Naive thymus-derived CD4-positive, alpha-beta T cell (primary cell): ENCODE measurements at regions of chr15 and their contacts with region 1.

Region 1: GRCh38 chr15:65384895-65385858 is 7.4 kb upstream of the IGDCC3 start:
- DNase-seq: peak; percentile 65 to 85 (median 78)
- ATAC-seq: peak; percentile 92
- H3K4me3 ChIP-seq: peak overlapping the region; percentile 83
- H3K4me3 Mint-ChIP-seq: peak overlapping the region; percentile 85 to 91 (median 90)
- H3K27ac ChIP-seq: peak overlapping the region; percentile 49
- H3K27ac Mint-ChIP-seq: peak overlapping the region in 5 of 9 donors; percentile 41 to 78 (median 67)
- H3K4me1 ChIP-seq: peaks cover 4 to 9% of the 10 kb centered on the region in 2 donors
- H3K4me1 Mint-ChIP-seq: peaks cover 4 to 11% (median 8%) of the 10 kb centered on the region in 7 donors
- H3K27me3 ChIP-seq: no peaks in the 10 kb centered on the region
- H3K27me3 Mint-ChIP-seq: peaks cover 5 to 44% (median 14%) of the 10 kb centered on the region in 5 donors

Region 2: DNA sequence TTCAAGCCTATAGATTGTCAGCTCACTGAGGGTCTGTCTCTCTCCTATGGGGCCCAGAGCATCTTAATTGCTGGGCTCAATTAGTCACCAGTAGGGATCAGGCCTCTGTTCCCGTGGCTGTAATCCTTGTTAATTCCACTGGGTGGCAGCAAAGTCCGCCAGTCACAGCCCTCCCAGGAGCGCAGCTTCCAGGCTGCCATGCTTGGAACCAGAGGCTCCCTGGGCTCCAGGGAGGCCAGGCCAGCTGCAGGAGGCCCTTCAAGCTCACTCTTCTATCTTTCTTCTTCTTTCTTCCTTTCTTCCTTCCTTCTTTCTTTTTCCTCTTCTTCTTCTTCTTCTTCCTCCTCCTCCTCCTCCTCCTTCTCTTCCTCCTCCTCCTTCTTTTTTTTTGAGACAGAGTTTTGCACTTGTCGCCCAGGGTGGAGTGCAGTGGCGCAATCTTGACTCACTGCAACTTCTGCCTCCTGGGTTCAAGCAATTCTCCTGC is 66.3 kb before region 1 on chr15:
- CTCF ChIA-PET with region 1: interaction called, 45 read pairs
- POLR2A ChIA-PET with region 1: interaction called, 3 read pairs
- intact Hi-C with region 1: loop called (anchors 1 kb)
- DNase-seq: peak; percentile 57 to 76 (median 71)
- ATAC-seq: peak; percentile 97
- H3K4me3 ChIP-seq: no peak overlapping the region
- H3K4me3 Mint-ChIP-seq: no peak overlapping the region
- H3K27ac ChIP-seq: no peak overlapping the region
- H3K27ac Mint-ChIP-seq: peak overlapping the region in 1 of 9 donors; percentile 2
- H3K4me1 ChIP-seq: no peaks in the 10 kb centered on the region
- H3K4me1 Mint-ChIP-seq: peaks cover 0 to 3% (median 0%) of the 10 kb centered on the region in 7 donors
- H3K27me3 ChIP-seq: no peaks in the 10 kb centered on the region
- H3K27me3 Mint-ChIP-seq: peaks cover 0 to 31% (median 7%) of the 10 kb centered on the region in 5 donors

Region 3: DNA sequence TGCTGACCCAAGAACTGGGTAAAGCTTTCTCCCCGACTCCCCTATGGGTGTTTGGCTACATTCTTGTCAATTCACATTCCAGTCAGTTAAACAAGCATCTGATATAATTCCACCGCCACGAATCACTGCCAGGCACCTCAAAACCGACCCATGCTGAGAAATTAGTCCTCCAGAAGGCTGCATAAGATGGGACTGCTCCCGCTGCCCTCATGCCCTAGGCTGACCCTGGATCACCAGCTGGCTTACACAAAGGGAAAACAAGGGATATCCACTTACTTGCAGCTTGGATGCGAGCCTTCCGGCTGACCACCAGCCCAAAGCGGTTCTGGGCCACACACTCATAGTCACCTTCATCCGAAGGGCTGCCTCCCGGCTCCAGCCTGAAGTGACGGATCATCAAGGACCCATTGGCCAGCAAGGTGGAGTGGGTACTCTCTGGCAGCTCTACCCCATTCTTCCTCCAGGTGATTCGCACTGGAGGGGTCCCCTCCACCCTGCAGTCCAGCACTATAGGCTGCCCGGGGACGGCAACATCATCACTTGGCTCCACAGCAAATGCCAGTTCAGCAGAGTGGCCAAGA is 10.3 kb before region 1 on chr15:
- CTCF ChIA-PET with region 1: interaction called, 10 read pairs
- POLR2A ChIA-PET with region 1: no interaction called
- intact Hi-C with region 1: no loop called
- DNase-seq: no peak
- ATAC-seq: no peak
- H3K4me3 ChIP-seq: no peak overlapping the region
- H3K4me3 Mint-ChIP-seq: no peak overlapping the region
- H3K27ac ChIP-seq: no peak overlapping the region
- H3K27ac Mint-ChIP-seq: no peak overlapping the region
- H3K4me1 ChIP-seq: peaks cover 0 to 7% of the 10 kb centered on the region in 2 donors
- H3K4me1 Mint-ChIP-seq: peaks cover 0 to 25% (median 20%) of the 10 kb centered on the region in 7 donors
- H3K27me3 ChIP-seq: peaks cover 6 to 21% of the 10 kb centered on the region in 2 donors
- H3K27me3 Mint-ChIP-seq: peaks cover 53 to 66% (median 60%) of the 10 kb centered on the region in 5 donors

Region 4: DNA sequence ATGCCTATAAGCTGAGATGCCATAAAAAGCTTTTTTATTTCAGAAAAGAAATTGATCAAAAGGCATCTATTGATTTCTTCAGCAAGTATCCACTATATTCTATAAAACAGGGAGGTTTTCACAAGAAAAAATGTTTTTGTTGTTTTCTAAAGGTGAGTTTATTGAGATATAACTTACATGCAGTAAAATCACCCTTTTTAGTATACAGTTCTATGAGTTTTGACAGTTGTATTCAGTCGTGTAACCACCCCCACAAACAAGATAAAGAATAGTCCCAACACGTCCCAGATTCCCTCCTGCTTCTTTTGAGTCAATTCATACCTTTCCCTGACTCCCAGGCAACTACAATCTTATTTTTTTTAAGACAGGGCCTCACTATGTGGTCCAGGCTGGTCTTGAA is 218.0 kb after region 1 on chr15:
- CTCF ChIA-PET with region 1: no interaction called
- POLR2A ChIA-PET with region 1: no interaction called
- intact Hi-C with region 1: no loop called
- DNase-seq: no peak
- ATAC-seq: no peak
- H3K4me3 ChIP-seq: no peak overlapping the region
- H3K4me3 Mint-ChIP-seq: no peak overlapping the region
- H3K27ac ChIP-seq: no peak overlapping the region
- H3K27ac Mint-ChIP-seq: no peak overlapping the region
- H3K4me1 ChIP-seq: no peaks in the 10 kb centered on the region
- H3K4me1 Mint-ChIP-seq: peaks cover 0 to 11% (median 0%) of the 10 kb centered on the region in 7 donors
- H3K27me3 ChIP-seq: no peaks in the 10 kb centered on the region
- H3K27me3 Mint-ChIP-seq: no peaks in the 10 kb centered on the region